HAP-1 (cell line): ENCODE measurements at regions of chrX and their contacts with region 1.

Region 1: DNA sequence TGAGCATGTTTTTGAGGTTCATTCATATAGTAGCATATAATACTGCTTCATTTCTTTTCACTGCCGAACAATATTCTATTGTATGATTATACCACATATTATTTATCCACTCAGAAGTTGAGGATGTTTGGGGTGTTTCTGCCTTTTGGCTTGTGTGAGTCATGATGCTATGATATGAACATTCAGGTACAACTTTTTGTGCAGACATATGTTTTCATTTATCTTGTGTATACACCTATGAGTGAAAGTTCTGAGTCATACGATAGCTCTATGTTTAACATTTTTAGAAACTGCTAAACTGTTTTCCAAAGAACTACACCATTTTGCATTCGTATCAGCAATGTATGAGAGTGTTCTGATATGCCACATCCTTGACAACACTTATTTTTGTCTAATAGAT is 57.7 kb downstream of the SHROOM4 start:
- DNase-seq: no peak
- H3K4me3 ChIP-seq: no peak overlapping the region
- H3K4me1 ChIP-seq: no peaks in the 10 kb centered on the region; the same call in 1 of the 2 replicates
- H3K27me3 ChIP-seq: no peaks in the 10 kb centered on the region

Region 2: DNA sequence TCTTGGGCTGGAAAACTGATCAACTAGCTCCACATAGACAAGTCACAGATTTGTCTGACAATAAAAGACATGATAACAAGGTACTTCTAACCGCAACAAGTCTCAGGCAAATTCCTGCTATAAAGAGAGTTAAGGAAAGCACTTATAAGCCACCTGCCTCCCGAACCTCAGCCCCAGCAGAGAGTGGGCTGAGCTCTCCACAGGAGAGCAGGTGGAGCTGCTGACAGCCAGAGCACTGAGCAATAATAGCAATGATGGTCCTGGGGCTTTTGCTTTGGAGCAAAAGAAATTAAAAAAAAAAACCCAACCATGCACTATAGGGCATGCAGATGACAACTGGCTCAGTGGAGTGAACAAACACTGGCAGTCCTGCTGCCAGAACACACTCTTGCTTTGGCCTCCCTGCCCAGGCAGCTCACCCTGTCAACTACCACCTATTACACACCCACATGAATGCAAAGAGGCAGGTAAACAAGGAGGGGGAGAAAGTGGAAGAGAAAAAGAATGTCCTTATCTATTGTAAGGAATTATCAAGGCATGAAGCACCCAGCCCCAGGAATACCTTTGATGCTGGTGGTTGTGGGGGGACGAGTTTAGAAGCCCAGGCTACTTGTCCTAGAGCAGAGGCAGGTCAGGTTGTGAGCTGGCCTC is 149.9 kb before region 1 on chrX:
- in situ Hi-C with region 1: no loop called
- DNase-seq: no peak
- H3K4me3 ChIP-seq: no peak overlapping the region
- H3K4me1 ChIP-seq: no peaks in the 10 kb centered on the region
- H3K27me3 ChIP-seq: no peaks in the 10 kb centered on the region

Region 3: DNA sequence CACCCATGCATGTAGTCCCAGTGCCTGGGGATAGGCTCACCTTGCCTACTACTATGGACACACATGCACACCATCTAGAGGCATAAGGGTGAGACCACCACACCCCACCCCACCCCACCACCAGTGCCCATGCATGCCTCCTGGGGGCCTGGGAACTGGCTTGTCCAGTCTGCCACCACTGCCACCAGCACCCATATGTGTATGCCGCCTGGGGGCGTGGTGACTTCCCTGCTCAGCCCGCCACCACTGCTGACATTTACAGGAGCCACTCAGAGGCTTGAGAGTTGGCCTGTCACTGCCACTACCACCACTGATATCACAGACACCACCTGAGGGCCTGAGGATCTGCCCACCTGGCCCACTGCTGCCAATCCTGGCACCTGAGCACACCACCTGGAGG is 133.9 kb after region 1 on chrX:
- in situ Hi-C with region 1: loop called (anchors 10 kb)
- DNase-seq: no peak
- H3K4me3 ChIP-seq: no peak overlapping the region
- H3K4me1 ChIP-seq: no peaks in the 10 kb centered on the region
- H3K27me3 ChIP-seq: no peaks in the 10 kb centered on the region